Caco-2 (cell line): ENCODE measurements at regions of chr9 and their contacts with region 1.

Region 1: GRCh38 chr9:108156270-108156998 is 666.9 kb upstream of the KLF4 start:
- DNase-seq: peak; percentile 79 to 85
- H3K4me3 ChIP-seq: peak overlapping the region; percentile 21; the same call in 1 of the 2 replicates
- H3K4me3 Mint-ChIP-seq: peak overlapping the region; percentile 11
- H3K27ac Mint-ChIP-seq: peak overlapping the region; percentile 26
- H3K4me1 ChIP-seq: peaks cover 28% of the 10 kb centered on the region
- H3K4me1 Mint-ChIP-seq: peaks cover 19% of the 10 kb centered on the region
- H3K27me3 ChIP-seq: no peaks in the 10 kb centered on the region
- H3K27me3 Mint-ChIP-seq: no peaks in the 10 kb centered on the region
- CTCF ChIP-seq: no peak

Region 2: DNA sequence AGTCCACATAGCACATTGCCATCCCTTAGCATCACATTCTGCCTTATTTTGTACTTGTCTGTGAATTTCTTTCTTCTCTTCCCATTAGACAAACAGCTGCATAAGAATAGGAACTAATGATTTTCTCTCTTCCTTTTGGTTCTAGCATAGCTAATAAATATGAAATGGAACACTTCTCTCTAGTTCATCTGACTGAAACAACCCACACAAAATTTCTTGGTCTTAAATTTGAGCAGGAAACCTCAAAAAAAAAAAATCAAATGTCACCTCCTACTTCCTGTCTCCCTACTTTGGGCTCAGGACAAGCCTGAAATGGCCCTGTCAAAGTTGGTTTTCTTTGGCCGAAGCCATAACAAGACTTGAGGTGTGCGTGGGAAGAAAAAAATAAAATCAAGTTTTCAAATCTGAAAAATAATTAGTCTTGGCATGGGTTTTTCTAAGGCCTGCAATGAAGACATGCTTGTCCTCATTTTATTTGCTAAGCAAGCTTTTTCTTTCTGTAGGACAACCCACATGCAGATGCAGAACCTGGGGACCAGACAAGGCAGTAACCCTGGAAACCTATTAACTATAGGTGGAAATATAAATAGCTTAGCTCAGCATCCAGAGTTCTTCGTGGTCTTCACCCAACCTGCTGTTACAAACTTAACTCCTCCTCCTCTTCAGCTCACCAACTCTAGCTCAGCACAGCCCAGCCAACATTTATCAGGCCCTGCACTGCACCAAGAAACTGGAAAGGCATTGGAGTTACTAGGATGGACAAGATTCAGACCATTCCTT is 143.4 kb before region 1 on chr9:
- CTCF ChIA-PET with region 1: no interaction called
- POLR2A ChIA-PET with region 1: no interaction called
- intact Hi-C with region 1: no loop called
- DNase-seq: no peak
- H3K4me3 ChIP-seq: no peak overlapping the region
- H3K4me3 Mint-ChIP-seq: no peak overlapping the region
- H3K27ac Mint-ChIP-seq: no peak overlapping the region
- H3K4me1 ChIP-seq: no peaks in the 10 kb centered on the region
- H3K4me1 Mint-ChIP-seq: no peaks in the 10 kb centered on the region
- H3K27me3 ChIP-seq: no peaks in the 10 kb centered on the region
- H3K27me3 Mint-ChIP-seq: no peaks in the 10 kb centered on the region
- CTCF ChIP-seq: no peak

Region 3: DNA sequence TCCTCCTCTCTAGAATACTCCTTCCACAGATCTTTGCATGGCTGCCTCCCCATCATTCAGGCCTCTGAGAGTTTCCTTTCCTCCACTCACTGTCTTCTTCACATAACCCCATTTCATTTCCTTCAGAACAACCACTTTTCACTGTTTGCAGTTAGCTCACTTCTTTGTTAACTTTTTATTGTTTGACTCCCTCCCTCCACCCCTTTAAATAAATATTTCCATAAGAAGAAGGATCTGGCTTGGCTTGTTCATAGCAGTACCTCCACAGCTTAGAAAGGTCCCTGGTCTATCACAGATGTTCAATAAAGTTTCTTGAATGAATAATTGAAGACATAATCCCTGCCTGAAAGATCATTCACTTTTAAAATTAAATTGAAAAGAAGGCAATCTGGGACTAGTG is 37.7 kb after region 1 on chr9:
- CTCF ChIA-PET with region 1: no interaction called
- POLR2A ChIA-PET with region 1: no interaction called
- intact Hi-C with region 1: loop called (anchors 2 kb)
- DNase-seq: no peak
- H3K4me3 ChIP-seq: no peak overlapping the region
- H3K4me3 Mint-ChIP-seq: no peak overlapping the region
- H3K27ac Mint-ChIP-seq: no peak overlapping the region
- H3K4me1 ChIP-seq: no peaks in the 10 kb centered on the region
- H3K4me1 Mint-ChIP-seq: peaks cover 16% of the 10 kb centered on the region
- H3K27me3 ChIP-seq: no peaks in the 10 kb centered on the region
- H3K27me3 Mint-ChIP-seq: no peaks in the 10 kb centered on the region
- CTCF ChIP-seq: no peak

Region 4: GRCh38 chr9:108264093-108264492 is 107.7 kb after region 1 on chr9:
- CTCF ChIA-PET with region 1: no interaction called
- POLR2A ChIA-PET with region 1: no interaction called
- intact Hi-C with region 1: no loop called
- DNase-seq: no peak
- H3K4me3 ChIP-seq: no peak overlapping the region
- H3K4me3 Mint-ChIP-seq: no peak overlapping the region
- H3K27ac Mint-ChIP-seq: no peak overlapping the region
- H3K4me1 ChIP-seq: peaks cover 5% of the 10 kb centered on the region
- H3K4me1 Mint-ChIP-seq: peaks cover 8% of the 10 kb centered on the region
- H3K27me3 ChIP-seq: no peaks in the 10 kb centered on the region
- H3K27me3 Mint-ChIP-seq: no peaks in the 10 kb centered on the region
- CTCF ChIP-seq: no peak